ENCODE measurements at regions of chr14 and their contacts with region 1.

Region 1: GRCh38 chr14:93042968-93043940 is 72.5 kb downstream of the ITPK1 start:
- DNase-seq: peak; percentile 72 to 91 (median 78)
- ATAC-seq: peak; percentile 72 to 84 (median 79)
- H3K4me3 ChIP-seq: no peak overlapping the region
- H3K27ac ChIP-seq: peak overlapping the region; percentile 43 to 96 (median 81)
- H3K4me1 ChIP-seq: peaks cover 8 to 94% (median 79%) of the 10 kb centered on the region in 12 donors
- H3K27me3 ChIP-seq: no peaks in the 10 kb centered on the region
- CTCF ChIP-seq: no peak
- POLR2A ChIP-seq: no peak

Region 2: DNA sequence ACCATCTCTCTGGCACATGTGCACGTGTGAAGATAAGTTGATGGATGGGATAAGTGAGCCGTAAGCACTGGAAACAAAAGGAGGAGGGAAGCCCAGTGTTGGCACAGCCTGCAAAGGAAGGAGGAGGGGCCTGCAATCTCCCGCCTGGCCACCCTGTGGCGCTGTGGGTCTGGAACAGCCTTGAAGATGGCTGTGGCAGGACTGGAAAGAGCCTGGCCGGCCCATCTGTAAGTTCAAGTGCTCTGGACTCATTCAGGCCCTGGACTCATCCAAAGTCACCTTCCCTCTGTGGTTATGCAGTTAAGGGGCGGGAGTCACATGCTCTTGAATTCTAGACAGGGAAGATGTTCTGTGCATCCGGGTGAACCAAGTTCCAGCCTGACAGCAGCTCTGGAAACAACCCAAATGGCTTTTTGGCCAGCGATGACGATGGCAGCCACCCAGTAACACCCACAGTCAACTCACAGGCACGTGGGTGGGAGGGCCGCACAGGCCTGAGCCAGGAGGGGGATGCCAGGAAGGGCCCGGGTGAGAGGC is 69.9 kb before region 1 on chr14:
- intact Hi-C with region 1: loop called in 2 of 10 experiments (anchors 5 kb)
- DNase-seq: peak; percentile 79 to 89 (median 84)
- ATAC-seq: peak; percentile 91 to 95 (median 92)
- H3K4me3 ChIP-seq: no peak overlapping the region
- H3K27ac ChIP-seq: peak overlapping the region; percentile 10 to 90 (median 80)
- H3K4me1 ChIP-seq: peaks cover 0 to 45% (median 19%) of the 10 kb centered on the region in 12 donors
- H3K27me3 ChIP-seq: no peaks in the 10 kb centered on the region
- CTCF ChIP-seq: peak; percentile 52 to 87 (median 72)
- POLR2A ChIP-seq: no peak

Region 3: GRCh38 chr14:92986254-92987147 is 56.8 kb before region 1 on chr14:
- intact Hi-C with region 1: loop called in 1 of 10 experiments (anchors 5 kb)
- DNase-seq: peak; percentile 41 to 83 (median 71)
- ATAC-seq: peak; percentile 78 to 86 (median 86)
- H3K4me3 ChIP-seq: no peak overlapping the region
- H3K27ac ChIP-seq: peak overlapping the region; percentile 48 to 90 (median 78)
- H3K4me1 ChIP-seq: peaks cover 0 to 55% (median 26%) of the 10 kb centered on the region in 12 donors
- H3K27me3 ChIP-seq: no peaks in the 10 kb centered on the region
- CTCF ChIP-seq: no peak
- POLR2A ChIP-seq: no peak

Region 4: DNA sequence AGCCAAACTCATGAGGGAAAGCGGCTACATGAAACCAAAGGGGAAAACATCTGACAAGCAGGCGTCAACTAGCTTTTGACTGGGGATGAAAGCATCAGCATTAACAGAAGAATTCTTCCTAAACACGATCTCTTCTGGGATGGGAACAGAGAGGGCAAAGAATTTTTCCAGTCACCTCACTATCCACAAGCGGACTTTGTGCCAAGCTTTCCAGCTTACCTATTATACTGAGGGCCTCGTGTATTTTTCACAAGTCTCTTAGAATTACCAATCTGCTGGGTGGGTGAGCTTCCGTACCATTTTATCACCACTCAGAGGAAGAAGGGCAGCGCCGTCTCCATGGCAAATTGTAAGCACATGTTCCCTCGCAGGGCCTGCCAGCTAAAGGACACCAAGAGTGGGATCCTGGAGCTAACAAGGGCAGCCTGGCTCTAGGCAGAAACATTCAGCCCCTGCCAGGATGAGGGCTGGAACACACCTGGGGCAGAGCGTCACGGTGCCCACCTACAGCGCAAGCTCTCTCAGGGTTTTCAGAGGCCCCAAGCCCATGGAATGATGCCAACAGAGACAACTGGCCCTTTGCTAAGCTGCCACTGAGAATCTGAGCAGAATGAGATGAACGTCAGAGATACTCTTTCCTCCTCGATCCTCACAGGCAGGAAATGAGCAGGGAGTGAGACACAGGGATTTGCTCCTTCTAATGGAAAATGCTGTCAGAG is 45.8 kb before region 1 on chr14:
- intact Hi-C with region 1: no loop called
- DNase-seq: no peak
- ATAC-seq: peak in 2 of 4 donors; percentile 24 to 35
- H3K4me3 ChIP-seq: no peak overlapping the region
- H3K27ac ChIP-seq: peak overlapping the region in 4 of 12 donors; percentile 5 to 61 (median 46)
- H3K4me1 ChIP-seq: peaks cover 0 to 45% (median 12%) of the 10 kb centered on the region in 12 donors
- H3K27me3 ChIP-seq: no peaks in the 10 kb centered on the region
- CTCF ChIP-seq: no peak
- POLR2A ChIP-seq: no peak

Region 5: GRCh38 chr14:93090826-93091555 is 47.7 kb after region 1 on chr14:
- intact Hi-C with region 1: loop called in 3 of 10 experiments (anchors 5 to 10 kb)
- DNase-seq: peak in 2 of 5 donors; percentile 44 to 72
- ATAC-seq: peak; percentile 35 to 60 (median 42)
- H3K4me3 ChIP-seq: no peak overlapping the region
- H3K27ac ChIP-seq: peak overlapping the region; percentile 39 to 77 (median 70)
- H3K4me1 ChIP-seq: peaks cover 5 to 95% (median 60%) of the 10 kb centered on the region in 12 donors
- H3K27me3 ChIP-seq: no peaks in the 10 kb centered on the region
- CTCF ChIP-seq: no peak
- POLR2A ChIP-seq: no peak

Region 6: GRCh38 chr14:93099196-93099595 is 55.9 kb after region 1 on chr14:
- intact Hi-C with region 1: loop called in 3 of 10 experiments (anchors 5 to 10 kb)
- DNase-seq: no peak
- ATAC-seq: no peak
- H3K4me3 ChIP-seq: no peak overlapping the region
- H3K27ac ChIP-seq: peak overlapping the region in 5 of 12 donors; percentile 6 to 56 (median 22)
- H3K4me1 ChIP-seq: peaks cover 0 to 71% (median 36%) of the 10 kb centered on the region in 12 donors
- H3K27me3 ChIP-seq: no peaks in the 10 kb centered on the region
- CTCF ChIP-seq: no peak
- POLR2A ChIP-seq: no peak

Measured in heart left ventricle (tissue), 16 donors.